Aorta (tissue), 5 donors: ENCODE measurements at regions of chr3 and their contacts with region 1.

Region 1: GRCh38 chr3:105906836-105907235 is 38.0 kb upstream of the CBLB start:
- DNase-seq: peak in 1 of 2 donors; percentile 48
- ATAC-seq: peak; percentile 93
- H3K4me3 ChIP-seq: no peak overlapping the region
- H3K27ac ChIP-seq: peak overlapping the region; percentile 42 to 57
- H3K4me1 ChIP-seq: peaks cover 8 to 11% of the 10 kb centered on the region in 2 donors
- H3K27me3 ChIP-seq: no peaks in the 10 kb centered on the region

Region 2: DNA sequence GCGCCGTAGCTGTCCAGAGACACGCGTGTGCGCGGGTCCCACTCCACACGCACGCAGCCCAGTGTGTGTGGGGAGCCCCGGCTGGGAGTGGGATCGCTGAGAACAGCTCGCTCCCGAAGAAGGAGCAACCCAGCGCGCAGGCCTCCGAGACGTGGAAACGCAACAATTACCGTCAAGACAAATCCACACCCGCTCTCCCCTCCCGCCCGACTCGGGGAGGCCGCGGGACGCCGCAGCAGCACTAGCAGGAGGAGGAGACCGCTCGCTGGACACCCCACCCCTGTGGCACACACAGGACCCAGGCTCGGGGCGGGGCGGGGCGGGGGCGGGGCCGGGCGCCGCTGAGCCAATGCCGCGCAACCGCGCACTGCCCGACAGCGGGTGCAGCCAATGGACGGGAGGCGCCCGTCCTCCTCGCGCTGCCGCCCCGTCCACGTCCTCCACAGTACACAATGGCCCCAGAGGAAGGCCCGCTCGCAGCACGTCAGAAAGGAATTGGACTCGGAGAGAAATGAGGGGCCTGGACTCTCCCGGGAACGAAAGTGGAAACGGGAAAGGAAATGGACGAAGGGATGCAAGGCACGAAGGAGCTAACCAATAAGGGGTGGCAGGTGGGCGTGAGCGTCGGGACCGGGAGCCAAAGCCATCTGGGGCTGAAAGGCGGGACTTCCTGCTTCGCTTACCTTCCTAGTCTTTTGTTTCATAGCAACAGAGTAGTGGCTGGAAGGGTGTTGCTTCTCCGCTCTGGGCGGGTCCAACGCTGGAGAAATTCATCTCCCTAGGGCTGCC is 37.9 kb before region 1 on chr3 and contains the start of gene CBLB:
- intact Hi-C with region 1: loop called (anchors 2 to 5 kb)
- DNase-seq: peak; percentile 94 to 97
- ATAC-seq: peak; percentile 97
- H3K4me3 ChIP-seq: peak within 1 kb of the TSS; percentile 61 to 94
- H3K27ac ChIP-seq: peak within 1 kb of the TSS; percentile 51 to 76
- H3K4me1 ChIP-seq: peaks cover 0 to 2% of the 10 kb centered on the region in 2 donors
- H3K27me3 ChIP-seq: no peaks in the 10 kb centered on the region
- total RNA-seq, gene CBLB: 93.3 to 126 TPM

Region 3: DNA sequence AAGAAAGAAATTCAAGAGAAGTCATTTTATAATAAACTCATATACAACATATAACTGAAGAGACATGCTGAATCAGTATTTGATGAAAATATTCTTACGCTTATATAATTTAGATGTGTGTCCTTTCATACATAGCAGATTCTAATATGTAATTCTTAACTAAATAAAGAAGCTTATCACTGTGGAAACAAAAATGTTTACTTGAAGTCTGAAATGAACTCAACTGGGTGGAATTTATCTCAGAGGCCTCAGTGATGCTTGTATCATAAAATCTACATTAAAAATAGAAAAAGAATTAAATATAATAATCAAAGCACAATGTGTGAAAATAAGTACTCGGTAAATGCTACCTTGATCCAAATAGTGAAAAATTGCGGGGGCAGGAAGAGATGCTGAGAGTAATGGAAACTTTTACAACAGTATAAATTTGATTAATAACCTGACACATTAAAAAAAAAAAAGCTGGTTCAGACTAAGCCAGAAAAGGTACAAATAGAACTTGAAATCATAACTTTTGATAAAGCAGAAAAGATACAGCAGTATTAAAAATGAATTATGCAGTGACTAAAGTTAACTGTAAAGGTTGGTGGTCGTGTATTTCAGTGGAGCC is 26.1 kb before region 1 on chr3:
- intact Hi-C with region 1: loop called in 1 of 2 experiments (anchors 2 kb)
- DNase-seq: no peak
- ATAC-seq: no peak
- H3K4me3 ChIP-seq: no peak overlapping the region
- H3K27ac ChIP-seq: no peak overlapping the region
- H3K4me1 ChIP-seq: no peaks in the 10 kb centered on the region
- H3K27me3 ChIP-seq: no peaks in the 10 kb centered on the region

Region 4: GRCh38 chr3:105970283-105970682 is 63.4 kb after region 1 on chr3:
- intact Hi-C with region 1: no loop called
- DNase-seq: no peak
- ATAC-seq: peak; percentile 64
- H3K4me3 ChIP-seq: no peak overlapping the region
- H3K27ac ChIP-seq: no peak overlapping the region
- H3K4me1 ChIP-seq: peaks cover 0 to 2% of the 10 kb centered on the region in 2 donors
- H3K27me3 ChIP-seq: no peaks in the 10 kb centered on the region